Natural killer cell (primary cell): ENCODE measurements at regions of chr2 and their contacts with region 1.

Region 1: GRCh38 chr2:70501728-70502127 is 51.9 kb downstream of the TGFA start:
- DNase-seq: no peak
- ATAC-seq: peak; percentile 67 to 79 (median 77)
- H3K4me3 ChIP-seq: no peak overlapping the region
- H3K4me3 Mint-ChIP-seq: peak overlapping the region; percentile 84
- H3K27ac ChIP-seq: peak overlapping the region; percentile 11
- H3K27ac Mint-ChIP-seq: peak overlapping the region; percentile 80 to 82
- H3K4me1 ChIP-seq: peaks cover 18% of the 10 kb centered on the region
- H3K4me1 Mint-ChIP-seq: peaks cover 44 to 65% of the 10 kb centered on the region in 2 donors
- H3K27me3 ChIP-seq: no peaks in the 10 kb centered on the region
- H3K27me3 Mint-ChIP-seq: no peaks in the 10 kb centered on the region
- CTCF ChIP-seq: no peak

Region 2: GRCh38 chr2:70475266-70475665 is 26.5 kb before region 1 on chr2:
- intact Hi-C with region 1: loop called (anchors 2 kb)
- DNase-seq: peak; percentile 28 to 45
- ATAC-seq: peak; percentile 77 to 84 (median 80)
- H3K4me3 ChIP-seq: no peak overlapping the region
- H3K4me3 Mint-ChIP-seq: peak overlapping the region; percentile 54
- H3K27ac ChIP-seq: no peak overlapping the region
- H3K27ac Mint-ChIP-seq: peak overlapping the region; percentile 81 to 84
- H3K4me1 ChIP-seq: peaks cover 48% of the 10 kb centered on the region
- H3K4me1 Mint-ChIP-seq: peaks cover 58 to 60% of the 10 kb centered on the region in 2 donors
- H3K27me3 ChIP-seq: no peaks in the 10 kb centered on the region
- H3K27me3 Mint-ChIP-seq: no peaks in the 10 kb centered on the region
- CTCF ChIP-seq: no peak

Region 3: GRCh38 chr2:70523996-70524965 is 22.6 kb after region 1 on chr2:
- intact Hi-C with region 1: loop called (anchors 2 kb)
- DNase-seq: peak; percentile 42 to 65
- ATAC-seq: peak; percentile 80 to 95 (median 87)
- H3K4me3 ChIP-seq: no peak overlapping the region
- H3K4me3 Mint-ChIP-seq: peak overlapping the region; percentile 35
- H3K27ac ChIP-seq: peak overlapping the region; percentile 56
- H3K27ac Mint-ChIP-seq: peak overlapping the region; percentile 83 to 93
- H3K4me1 ChIP-seq: peaks cover 29% of the 10 kb centered on the region
- H3K4me1 Mint-ChIP-seq: peaks cover 32 to 33% of the 10 kb centered on the region in 2 donors
- H3K27me3 ChIP-seq: peaks cover 4% of the 10 kb centered on the region
- H3K27me3 Mint-ChIP-seq: peaks cover 3 to 9% of the 10 kb centered on the region in 2 donors
- CTCF ChIP-seq: no peak